Activated B cell treated with CpG ODN at 0.5 μM for 24 hours (primary cell): ENCODE measurements at regions of chr12 and their contacts with region 1.

Region 1: GRCh38 chr12:6752921-6753771 is at the start of gene MLF2:
- DNase-seq: peak; percentile 98
- ATAC-seq: peak; percentile 91
- H3K4me3 Mint-ChIP-seq: peak within 1 kb of the TSS; percentile 93
- H3K27ac Mint-ChIP-seq: peak within 1 kb of the TSS; percentile 99
- H3K4me1 Mint-ChIP-seq: peaks cover 16% of the 10 kb centered on the region
- H3K27me3 Mint-ChIP-seq: no peaks in the 10 kb centered on the region
- CTCF ChIP-seq: peak; percentile 76
- total RNA-seq, gene MLF2: 102 and 105 TPM in 2 replicates

Region 2: GRCh38 chr12:6493497-6494257 is 259.5 kb before region 1 on chr12 and contains the start of gene NCAPD2:
- CTCF ChIA-PET with region 1: no interaction called
- POLR2A ChIA-PET with region 1: interaction called, 7 read pairs
- intact Hi-C with region 1: loop called (anchors 1 kb)
- DNase-seq: peak; percentile 85
- ATAC-seq: peak; percentile 85
- H3K4me3 Mint-ChIP-seq: peak within 1 kb of the TSS; percentile 97
- H3K27ac Mint-ChIP-seq: peak within 1 kb of the TSS; percentile 96
- H3K4me1 Mint-ChIP-seq: peaks cover 28% of the 10 kb centered on the region
- H3K27me3 Mint-ChIP-seq: no peaks in the 10 kb centered on the region
- CTCF ChIP-seq: no peak
- total RNA-seq, gene NCAPD2: 38.4 and 40.9 TPM in 2 replicates

Region 3: GRCh38 chr12:6613776-6614512 is 139.2 kb before region 1 on chr12:
- CTCF ChIA-PET with region 1: no interaction called
- POLR2A ChIA-PET with region 1: interaction called, 17 read pairs
- intact Hi-C with region 1: loop called (anchors 1 kb)
- DNase-seq: peak; percentile 28
- ATAC-seq: peak; percentile 36
- H3K4me3 Mint-ChIP-seq: no peak overlapping the region
- H3K27ac Mint-ChIP-seq: peak overlapping the region; percentile 88
- H3K4me1 Mint-ChIP-seq: peaks cover 75% of the 10 kb centered on the region
- H3K27me3 Mint-ChIP-seq: no peaks in the 10 kb centered on the region
- CTCF ChIP-seq: no peak

Region 4: DNA sequence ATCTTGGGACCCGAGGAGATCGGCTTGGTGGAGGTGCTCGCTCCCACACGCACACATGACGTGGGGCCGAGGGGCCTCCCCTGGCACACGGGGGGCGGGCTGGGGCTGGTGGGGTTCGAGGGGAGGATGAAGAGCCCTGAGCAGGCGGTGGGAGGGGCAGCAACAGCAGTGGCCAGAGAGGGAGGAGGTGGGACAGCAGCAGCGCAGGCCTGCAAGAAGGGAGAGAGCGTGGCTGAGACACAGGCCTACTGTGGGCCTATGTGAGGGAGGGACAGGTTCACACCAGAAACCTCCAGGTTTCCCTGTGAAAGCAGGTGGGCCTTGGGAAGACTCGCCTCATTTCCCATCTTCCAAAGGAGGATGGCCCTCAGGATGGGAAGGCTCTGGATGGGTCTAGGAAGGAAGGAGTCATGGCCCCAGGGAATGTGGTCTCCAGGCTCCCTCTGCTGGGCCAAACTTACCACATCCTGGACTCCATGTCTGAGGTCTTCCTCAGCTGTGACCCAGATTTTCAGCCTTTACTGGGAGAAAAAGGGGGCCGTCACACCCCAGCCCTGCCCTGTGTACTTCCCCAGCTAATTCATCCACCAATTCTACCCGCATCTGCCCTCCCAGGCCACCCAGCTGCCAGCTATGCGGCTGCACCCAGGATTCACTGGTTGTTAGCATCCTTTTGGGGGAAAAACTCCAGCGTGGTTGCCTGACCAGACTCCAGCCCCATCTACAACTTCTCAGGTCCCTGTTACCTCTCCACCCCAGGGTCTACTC is 55.4 kb before region 1 on chr12:
- CTCF ChIA-PET with region 1: no interaction called
- POLR2A ChIA-PET with region 1: interaction called, 17 read pairs
- intact Hi-C with region 1: loop called (anchors 2 kb)
- DNase-seq: no peak
- ATAC-seq: no peak
- H3K4me3 Mint-ChIP-seq: peak overlapping the region; percentile 42
- H3K27ac Mint-ChIP-seq: peak overlapping the region; percentile 74
- H3K4me1 Mint-ChIP-seq: peaks cover 60% of the 10 kb centered on the region
- H3K27me3 Mint-ChIP-seq: peaks cover 18% of the 10 kb centered on the region
- CTCF ChIP-seq: no peak

Region 5: DNA sequence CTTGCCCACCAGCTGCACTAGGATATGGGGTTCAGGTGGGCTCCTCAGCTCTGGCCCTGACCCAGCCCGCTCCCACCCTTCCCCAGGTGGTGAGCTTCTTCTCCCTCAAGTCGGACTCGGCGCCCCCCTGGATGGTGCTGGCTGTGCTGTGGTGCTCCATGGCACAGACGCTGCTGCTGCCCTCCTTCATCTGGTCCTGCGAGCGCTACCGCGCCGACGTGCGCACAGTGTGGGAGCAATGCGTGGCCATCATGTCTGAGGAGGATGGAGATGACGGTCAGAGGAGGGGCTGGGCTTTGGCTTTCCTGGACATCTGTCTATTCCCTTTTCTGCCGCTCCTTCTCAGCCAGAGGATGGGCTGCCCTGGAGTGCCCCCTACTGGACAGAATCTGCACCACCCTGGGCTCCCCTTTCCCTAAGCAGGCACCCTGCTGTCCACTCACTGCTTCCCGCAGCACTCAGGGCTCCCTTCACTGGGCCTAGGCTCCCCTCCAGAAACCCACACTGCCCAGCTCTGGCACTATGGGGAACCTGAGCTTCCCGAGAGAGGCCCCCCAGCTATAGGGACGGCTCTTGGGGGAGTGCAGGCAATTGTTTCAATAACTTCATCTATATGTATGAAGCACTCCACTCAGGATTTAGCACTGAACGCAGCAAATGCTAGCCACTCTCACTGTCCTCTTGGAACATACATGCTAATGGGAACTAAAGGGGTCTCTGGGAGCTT is 72.4 kb after region 1 on chr12:
- CTCF ChIA-PET with region 1: interaction called, 15 read pairs
- POLR2A ChIA-PET with region 1: interaction called, 6 read pairs
- intact Hi-C with region 1: loop called (anchors 1 kb)
- DNase-seq: peak; percentile 69
- ATAC-seq: peak; percentile 62
- H3K4me3 Mint-ChIP-seq: no peak overlapping the region
- H3K27ac Mint-ChIP-seq: no peak overlapping the region
- H3K4me1 Mint-ChIP-seq: peaks cover 32% of the 10 kb centered on the region
- H3K27me3 Mint-ChIP-seq: peaks cover 73% of the 10 kb centered on the region
- CTCF ChIP-seq: peak; percentile 47

Region 6: DNA sequence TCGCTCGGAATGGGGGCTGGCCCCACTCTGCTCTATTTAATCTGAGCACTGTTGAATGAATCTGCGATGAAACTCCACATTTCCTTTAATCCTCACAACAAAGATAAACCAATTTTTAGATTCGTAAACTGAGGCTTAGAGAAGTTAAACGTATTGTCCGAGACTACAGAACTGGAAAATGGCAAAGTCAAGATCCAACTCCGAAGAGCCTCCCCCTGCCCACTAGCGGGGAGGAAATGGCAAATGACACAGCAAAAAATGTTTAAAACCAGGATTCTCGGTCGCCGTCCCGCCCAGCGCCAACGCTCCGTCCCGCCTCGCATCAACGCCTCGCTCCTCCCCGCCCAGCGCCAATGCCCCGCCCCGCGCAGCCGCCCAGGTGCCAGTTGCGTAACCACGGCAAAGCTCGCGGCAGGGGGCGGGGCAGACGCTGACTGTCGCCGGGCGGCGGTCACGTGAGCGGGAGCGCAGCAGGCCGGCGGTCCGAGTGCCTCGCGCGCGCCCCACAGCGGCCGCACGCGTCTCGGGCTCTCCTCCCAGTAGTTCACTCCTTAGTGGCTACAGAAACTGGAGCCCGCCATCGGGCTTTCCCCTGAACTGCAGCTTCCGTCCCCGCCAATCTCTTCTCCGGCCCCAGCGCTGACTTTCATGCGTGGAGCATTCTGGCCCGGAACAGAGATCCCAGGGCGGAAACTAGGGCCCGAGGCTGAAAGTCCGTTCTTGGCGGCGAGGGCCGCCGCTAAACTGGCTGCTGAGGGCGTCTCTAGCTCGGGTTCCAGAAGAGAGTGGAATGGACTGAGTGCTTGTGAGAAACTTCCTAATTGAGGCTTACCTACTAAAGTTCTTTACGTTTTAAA is 137.9 kb after region 1 on chr12:
- CTCF ChIA-PET with region 1: no interaction called
- POLR2A ChIA-PET with region 1: interaction called, 11 read pairs
- intact Hi-C with region 1: loop called (anchors 1 kb)
- DNase-seq: peak; percentile 97
- ATAC-seq: peak; percentile 93
- H3K4me3 Mint-ChIP-seq: peak overlapping the region; percentile 84
- H3K27ac Mint-ChIP-seq: peak overlapping the region; percentile 93
- H3K4me1 Mint-ChIP-seq: peaks cover 15% of the 10 kb centered on the region
- H3K27me3 Mint-ChIP-seq: no peaks in the 10 kb centered on the region
- CTCF ChIP-seq: peak; percentile 65

Region 7: GRCh38 chr12:8032242-8033152 is 1279.4 kb after region 1 on chr12 and contains the start of gene FOXJ2:
- CTCF ChIA-PET with region 1: no interaction called
- POLR2A ChIA-PET with region 1: interaction called, 10 read pairs
- intact Hi-C with region 1: no loop called
- DNase-seq: peak; percentile 73
- ATAC-seq: peak; percentile 86
- H3K4me3 Mint-ChIP-seq: peak within 1 kb of the TSS; percentile 86
- H3K27ac Mint-ChIP-seq: peak within 1 kb of the TSS; percentile 74
- H3K4me1 Mint-ChIP-seq: peaks cover 53% of the 10 kb centered on the region
- H3K27me3 Mint-ChIP-seq: no peaks in the 10 kb centered on the region
- CTCF ChIP-seq: no peak
- total RNA-seq, gene FOXJ2: 12.5 and 13.6 TPM in 2 replicates